CD8-positive, alpha-beta T cell (primary cell): ENCODE measurements at regions of chr19 and their contacts with region 1.

Region 1: DNA sequence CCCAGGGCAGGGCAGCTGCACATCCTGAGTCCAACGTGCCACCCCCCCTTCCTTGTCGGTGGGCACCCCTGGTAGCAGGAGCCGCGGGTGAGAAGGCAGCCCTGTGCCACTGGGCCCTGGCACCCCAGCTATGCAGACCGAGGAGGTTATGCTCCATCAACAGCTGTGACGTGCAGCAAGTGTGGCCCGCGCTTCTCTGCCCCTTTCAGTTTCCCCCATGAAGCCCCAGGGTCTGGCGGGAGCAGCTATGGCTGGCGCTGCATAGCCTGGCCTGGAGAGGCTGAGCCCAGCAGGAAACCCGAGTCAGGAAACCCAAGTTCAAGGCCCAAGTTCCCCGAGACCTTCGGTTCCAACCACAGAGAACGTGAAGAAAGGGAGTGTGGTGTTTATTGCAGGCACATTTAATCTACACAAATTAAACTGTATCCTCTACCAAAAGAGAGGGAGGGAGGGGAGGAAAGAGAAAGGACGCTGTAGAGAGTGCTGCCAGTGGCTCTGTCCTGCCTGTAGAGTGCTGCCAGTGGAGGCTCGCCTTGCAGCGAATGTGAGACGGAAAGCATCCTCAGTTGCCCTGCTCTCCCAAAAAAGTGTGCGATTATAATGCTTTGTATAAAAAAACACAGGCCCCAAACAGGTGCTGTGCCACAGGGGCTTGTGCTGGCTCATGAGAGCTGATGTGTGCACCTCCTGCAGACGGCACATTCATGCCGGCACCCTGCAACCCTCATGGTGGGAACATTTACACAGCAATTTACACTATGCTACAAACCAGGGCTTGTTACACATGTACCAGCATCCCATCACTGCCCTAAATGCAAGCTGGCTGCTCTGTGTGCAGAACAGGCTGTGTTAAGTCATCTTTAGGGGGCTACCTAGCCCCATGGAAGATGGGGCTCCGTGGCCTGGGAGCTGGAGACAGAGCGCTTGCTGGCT is 16.3 kb downstream of the POP4 start:
- DNase-seq: peak in 6 of 9 experiments; percentile 26 to 73 (median 57)
- ATAC-seq: peak; percentile 65
- H3K4me3 ChIP-seq: peak overlapping the region; percentile 1 to 13
- H3K4me3 Mint-ChIP-seq: peak overlapping the region; percentile 68
- H3K27ac ChIP-seq: peak overlapping the region; percentile 2 to 66
- H3K27ac Mint-ChIP-seq: peak overlapping the region; percentile 75
- H3K4me1 ChIP-seq: peaks cover 47% of the 10 kb centered on the region
- H3K4me1 Mint-ChIP-seq: peaks cover 46% of the 10 kb centered on the region
- H3K27me3 ChIP-seq: no peaks in the 10 kb centered on the region
- H3K27me3 Mint-ChIP-seq: no peaks in the 10 kb centered on the region
- CTCF ChIP-seq: no peak

Region 2: DNA sequence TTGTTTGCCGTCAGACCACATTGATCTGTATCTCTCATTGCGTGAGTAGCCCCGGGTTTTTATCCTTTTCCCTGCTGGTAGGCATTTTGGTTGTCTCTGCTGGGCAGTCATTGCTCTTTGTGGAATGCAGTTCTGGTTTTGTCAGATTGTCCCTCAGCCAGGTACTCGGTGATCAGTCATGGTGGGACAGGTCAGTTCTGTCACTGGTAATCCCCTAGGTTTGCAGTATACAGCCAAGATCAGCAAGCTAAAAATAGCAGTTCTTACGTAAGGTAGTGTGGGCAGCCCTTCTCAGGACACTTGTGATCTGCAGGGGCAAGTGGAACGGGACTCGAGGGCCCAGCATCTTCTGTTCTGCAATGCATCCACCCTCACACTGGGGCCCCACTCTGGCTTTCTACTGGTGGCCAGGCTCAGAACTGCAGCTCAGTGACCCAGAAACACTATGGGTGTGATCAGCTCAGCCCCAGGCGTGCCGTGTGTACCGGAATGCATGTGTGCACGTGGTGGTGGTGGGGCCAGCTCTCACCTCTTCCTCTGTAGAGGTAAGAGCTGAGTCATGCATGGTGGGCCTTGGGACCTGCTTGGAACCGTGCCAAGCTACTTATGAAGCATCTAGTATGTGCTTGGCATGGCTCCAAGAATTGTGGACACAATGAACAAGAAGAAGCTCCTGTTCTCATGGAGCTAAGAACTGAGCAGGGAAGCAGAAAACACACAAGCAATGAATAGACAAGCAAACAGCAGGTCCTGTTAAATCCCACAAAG is 49.2 kb after region 1 on chr19:
- CTCF ChIA-PET with region 1: interaction called, 19 read pairs
- POLR2A ChIA-PET with region 1: interaction called, 27 read pairs
- intact Hi-C with region 1: loop called in 1 of 2 experiments (anchors 2 kb)
- DNase-seq: peak; percentile 73 to 96 (median 91)
- ATAC-seq: peak; percentile 62
- H3K4me3 ChIP-seq: peak overlapping the region; percentile 16 to 26
- H3K4me3 Mint-ChIP-seq: peak overlapping the region; percentile 49
- H3K27ac ChIP-seq: peak overlapping the region; percentile 80 to 84
- H3K27ac Mint-ChIP-seq: peak overlapping the region; percentile 94
- H3K4me1 ChIP-seq: peaks cover 97% of the 10 kb centered on the region
- H3K4me1 Mint-ChIP-seq: peaks cover 90% of the 10 kb centered on the region
- H3K27me3 ChIP-seq: no peaks in the 10 kb centered on the region
- H3K27me3 Mint-ChIP-seq: no peaks in the 10 kb centered on the region
- CTCF ChIP-seq: peak; percentile 62